Activated T-helper 1 cell treated with anti-CD3 and anti-CD28 coated beads, Interleukin-12 subunit alpha, Interleukin-12 subunit beta, Interleukin-2, Interleukin-4 antibody, amounts not matched to agents 30 ng/mL and 10 ng/mL and 1 ng/mL, durations not matched to agents 14 hours and 24 hours and 36 hours (primary cell): ENCODE measurements at regions of chr1 and their contacts with region 1.

Region 1: DNA sequence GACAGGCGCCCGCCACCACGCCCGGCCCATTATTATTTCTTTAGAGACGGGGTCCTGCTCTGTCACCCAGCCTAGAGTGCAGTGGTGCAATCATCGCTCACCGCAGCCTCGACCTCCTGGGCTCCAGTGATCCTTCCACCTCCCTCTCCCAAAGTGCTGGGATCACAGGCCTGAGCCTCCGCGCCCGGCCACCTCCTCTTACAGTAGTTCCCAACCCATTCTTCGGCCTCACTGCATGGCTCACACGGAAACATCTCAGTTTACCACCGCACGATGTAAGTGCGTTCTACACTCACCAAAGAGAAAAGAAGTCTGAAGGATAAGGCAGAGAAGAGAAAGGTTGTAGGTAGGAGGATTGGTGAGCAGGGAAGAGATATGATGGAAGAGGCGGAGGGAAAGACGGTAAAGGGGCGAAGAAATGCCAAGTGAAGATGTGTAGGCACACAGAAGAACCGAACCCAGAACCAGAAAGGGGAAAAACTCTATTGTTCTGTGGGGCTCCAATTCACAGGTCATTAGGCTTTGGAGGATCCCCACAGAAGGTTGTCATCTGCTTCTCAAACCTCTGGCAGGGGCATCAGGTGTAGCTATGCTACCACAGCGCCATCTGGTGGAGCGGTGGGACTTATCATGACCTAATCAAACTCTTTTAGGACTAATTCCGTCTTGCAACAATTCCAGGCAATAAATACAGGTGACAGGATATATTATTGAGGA is 504.2 kb downstream of the SMYD3 start:
- DNase-seq: peak; percentile 52
- H3K4me3 Mint-ChIP-seq: no peak overlapping the region
- H3K27ac Mint-ChIP-seq: no peak overlapping the region
- H3K4me1 Mint-ChIP-seq: no peaks in the 10 kb centered on the region
- H3K27me3 Mint-ChIP-seq: no peaks in the 10 kb centered on the region

Region 2: GRCh38 chr1:245079021-245079609 is 923.8 kb before region 1 on chr1:
- intact Hi-C with region 1: loop called (anchors 5 kb)
- DNase-seq: no peak
- H3K4me3 Mint-ChIP-seq: no peak overlapping the region
- H3K27ac Mint-ChIP-seq: no peak overlapping the region
- H3K4me1 Mint-ChIP-seq: peaks cover 5% of the 10 kb centered on the region
- H3K27me3 Mint-ChIP-seq: peaks cover 3% of the 10 kb centered on the region

Region 3: GRCh38 chr1:245858722-245859492 is 144.0 kb before region 1 on chr1:
- intact Hi-C with region 1: loop called (anchors 1 kb)
- DNase-seq: no peak
- H3K4me3 Mint-ChIP-seq: no peak overlapping the region
- H3K27ac Mint-ChIP-seq: no peak overlapping the region
- H3K4me1 Mint-ChIP-seq: no peaks in the 10 kb centered on the region
- H3K27me3 Mint-ChIP-seq: no peaks in the 10 kb centered on the region

Region 4: GRCh38 chr1:245888809-245889208 is 114.1 kb before region 1 on chr1:
- intact Hi-C with region 1: loop called (anchors 1 kb)
- DNase-seq: no peak
- H3K4me3 Mint-ChIP-seq: no peak overlapping the region
- H3K27ac Mint-ChIP-seq: no peak overlapping the region
- H3K4me1 Mint-ChIP-seq: no peaks in the 10 kb centered on the region
- H3K27me3 Mint-ChIP-seq: no peaks in the 10 kb centered on the region

Region 5: DNA sequence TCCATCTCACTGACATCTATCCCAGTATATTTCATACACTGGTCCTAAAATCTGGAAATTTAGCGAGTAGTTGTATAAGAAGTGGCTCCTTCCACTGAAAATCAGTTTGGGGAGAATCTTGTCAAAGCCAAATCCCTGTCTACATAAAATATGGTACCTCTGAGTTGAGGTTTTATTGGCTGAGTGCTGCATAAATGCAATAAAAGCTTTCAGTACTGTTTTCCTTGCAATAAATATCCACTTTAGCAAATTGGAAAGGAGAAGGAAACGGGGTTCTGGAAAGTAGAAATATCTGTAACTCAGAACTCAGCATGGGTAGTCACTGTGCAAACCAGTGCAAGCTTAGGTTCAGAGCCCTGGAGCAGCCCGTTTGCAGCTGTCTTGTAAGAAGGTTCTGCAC is 76.0 kb before region 1 on chr1:
- intact Hi-C with region 1: no loop called
- DNase-seq: no peak
- H3K4me3 Mint-ChIP-seq: no peak overlapping the region
- H3K27ac Mint-ChIP-seq: no peak overlapping the region
- H3K4me1 Mint-ChIP-seq: no peaks in the 10 kb centered on the region
- H3K27me3 Mint-ChIP-seq: no peaks in the 10 kb centered on the region

Region 6: DNA sequence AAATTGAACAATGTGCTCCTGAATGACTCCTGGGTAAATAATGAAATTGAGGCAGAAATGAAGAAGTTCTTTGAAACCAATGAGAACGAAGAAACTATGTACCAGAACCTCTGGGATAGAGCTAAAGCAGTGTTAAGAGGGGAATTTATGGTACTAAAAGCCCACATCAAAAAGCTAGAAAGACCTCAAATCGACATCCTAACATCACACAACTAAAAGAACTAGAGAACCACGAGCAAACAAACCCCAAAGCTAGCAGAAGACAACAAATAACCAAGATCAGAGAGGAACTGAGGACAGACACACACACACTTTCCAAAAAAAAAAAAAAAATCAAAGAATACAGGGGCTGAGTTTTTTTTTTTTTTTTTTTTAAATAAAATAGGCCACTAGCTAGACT is 60.0 kb before region 1 on chr1:
- intact Hi-C with region 1: no loop called
- DNase-seq: no peak
- H3K4me3 Mint-ChIP-seq: no peak overlapping the region
- H3K27ac Mint-ChIP-seq: peak overlapping the region; percentile 5
- H3K4me1 Mint-ChIP-seq: peaks cover 10% of the 10 kb centered on the region
- H3K27me3 Mint-ChIP-seq: peaks cover 6% of the 10 kb centered on the region

Region 7: DNA sequence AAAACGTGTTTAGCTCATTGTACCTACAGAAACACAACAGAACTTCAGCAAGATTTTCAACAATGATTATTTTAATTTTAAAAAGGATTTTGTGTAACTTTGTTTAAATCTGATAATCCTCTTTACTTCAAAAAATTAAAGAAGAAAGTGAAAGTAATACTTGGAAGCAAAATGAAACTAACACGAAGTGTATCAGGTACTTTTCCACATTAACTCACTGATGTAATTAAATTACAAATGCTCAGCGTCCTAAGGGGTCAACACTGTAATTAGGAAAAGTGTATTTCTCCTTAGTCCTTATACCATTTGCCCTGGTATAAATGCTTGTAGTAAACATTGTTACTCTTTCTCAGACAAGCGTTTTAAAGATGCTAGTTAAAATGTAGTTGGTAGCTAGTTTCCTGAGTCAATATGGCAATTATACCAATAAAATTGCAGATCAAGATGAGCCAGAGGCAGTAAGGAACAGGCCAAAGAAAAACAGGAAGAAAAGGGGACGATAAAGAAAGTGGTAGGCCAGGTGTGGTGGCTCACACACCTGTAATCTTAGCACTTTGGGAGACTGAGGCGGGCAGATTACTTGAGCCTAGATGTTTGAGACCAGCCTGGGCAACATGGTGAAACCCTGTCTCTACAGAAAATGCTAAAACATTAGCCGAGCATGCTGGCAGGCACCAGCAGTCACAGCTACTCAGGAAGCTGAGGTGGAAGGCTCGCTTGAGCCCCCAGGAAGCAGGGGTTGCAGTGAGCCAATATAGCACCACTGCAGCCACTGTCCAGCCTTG is 48.8 kb before region 1 on chr1:
- intact Hi-C with region 1: loop called (anchors 1 kb)
- DNase-seq: no peak
- H3K4me3 Mint-ChIP-seq: peak overlapping the region; percentile 75
- H3K27ac Mint-ChIP-seq: peak overlapping the region; percentile 88
- H3K4me1 Mint-ChIP-seq: peaks cover 26% of the 10 kb centered on the region
- H3K27me3 Mint-ChIP-seq: no peaks in the 10 kb centered on the region

Region 8: GRCh38 chr1:245990315-245991022 is 12.4 kb before region 1 on chr1:
- intact Hi-C with region 1: no loop called
- DNase-seq: no peak
- H3K4me3 Mint-ChIP-seq: no peak overlapping the region
- H3K27ac Mint-ChIP-seq: no peak overlapping the region
- H3K4me1 Mint-ChIP-seq: no peaks in the 10 kb centered on the region
- H3K27me3 Mint-ChIP-seq: no peaks in the 10 kb centered on the region

Region 9: GRCh38 chr1:246117066-246117791 is 114.3 kb after region 1 on chr1:
- intact Hi-C with region 1: no loop called
- DNase-seq: peak; percentile 1
- H3K4me3 Mint-ChIP-seq: peak overlapping the region; percentile 64
- H3K27ac Mint-ChIP-seq: no peak overlapping the region
- H3K4me1 Mint-ChIP-seq: peaks cover 11% of the 10 kb centered on the region
- H3K27me3 Mint-ChIP-seq: no peaks in the 10 kb centered on the region